ENCODE measurements at regions of chr9 and their contacts with region 1.

Region 1: GRCh38 chr9:83937911-83938323 is 16.7 kb upstream of the KIF27 start:
- DNase-seq: no peak
- ATAC-seq: peak; percentile 70

Region 2: GRCh38 chr9:84261082-84261746 is 323.3 kb after region 1 on chr9:
- intact Hi-C with region 1: loop called in 1 of 2 experiments (anchors 5 kb)
- DNase-seq: peak; percentile 68 to 90
- ATAC-seq: peak; percentile 99

Region 3: GRCh38 chr9:84315278-84315877 is 377.5 kb after region 1 on chr9:
- intact Hi-C with region 1: loop called in 1 of 2 experiments (anchors 5 kb)
- DNase-seq: peak; percentile 33 to 66
- ATAC-seq: peak; percentile 73

Measured in left colon (tissue), 2 donors.